ENCODE measurements at regions of chr20 and their contacts with region 1.

Region 1: DNA sequence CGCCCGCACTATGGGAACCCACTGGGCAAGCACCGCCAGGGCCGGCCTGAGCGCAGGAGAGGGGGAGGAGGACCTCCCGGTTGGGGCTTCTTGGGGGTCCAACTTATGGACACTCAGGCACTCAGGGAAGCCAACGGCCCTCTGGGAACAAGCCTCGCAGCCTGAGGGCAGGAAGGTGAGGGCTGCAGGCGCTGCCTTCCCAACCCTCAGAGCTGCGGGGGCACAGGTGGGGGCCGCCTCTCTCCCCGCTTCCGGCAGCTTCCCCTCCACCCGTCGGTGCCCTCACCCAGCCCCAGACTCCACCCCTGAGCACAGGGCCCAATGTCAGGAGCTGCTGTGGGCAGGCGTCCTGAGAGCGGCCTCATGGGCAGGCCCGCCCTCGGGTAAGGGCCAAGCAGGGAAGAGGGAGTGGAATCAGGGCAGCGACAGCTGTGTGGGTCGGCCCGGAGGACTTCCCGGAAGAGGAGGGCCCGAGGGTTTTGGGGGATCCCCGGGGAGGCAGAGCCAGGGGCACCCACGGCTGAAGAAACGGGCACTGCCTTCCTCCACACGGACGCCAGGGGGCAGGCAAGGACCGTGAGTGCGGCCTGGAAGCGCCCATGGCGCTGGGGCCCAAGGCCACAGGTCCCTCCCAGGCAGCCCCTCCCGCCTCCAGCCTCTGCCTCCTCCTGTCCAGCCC is 488 bp upstream of the PTK6 start:
- DNase-seq: peak; percentile 97
- H3K4me3 Mint-ChIP-seq: peak overlapping the region; percentile 73
- H3K27ac Mint-ChIP-seq: peak overlapping the region; percentile 87
- H3K4me1 Mint-ChIP-seq: peaks cover 27% of the 10 kb centered on the region
- H3K27me3 Mint-ChIP-seq: peaks cover 2% of the 10 kb centered on the region

Region 2: GRCh38 chr20:63553227-63553932 is 15.7 kb after region 1 on chr20:
- CTCF ChIA-PET with region 1: interaction called, 20 read pairs
- POLR2A ChIA-PET with region 1: interaction called, 31 read pairs
- DNase-seq: peak; percentile 90
- H3K4me3 Mint-ChIP-seq: peak overlapping the region; percentile 41
- H3K27ac Mint-ChIP-seq: peak overlapping the region; percentile 77
- H3K4me1 Mint-ChIP-seq: peaks cover 15% of the 10 kb centered on the region
- H3K27me3 Mint-ChIP-seq: peaks cover 23% of the 10 kb centered on the region

Region 3: DNA sequence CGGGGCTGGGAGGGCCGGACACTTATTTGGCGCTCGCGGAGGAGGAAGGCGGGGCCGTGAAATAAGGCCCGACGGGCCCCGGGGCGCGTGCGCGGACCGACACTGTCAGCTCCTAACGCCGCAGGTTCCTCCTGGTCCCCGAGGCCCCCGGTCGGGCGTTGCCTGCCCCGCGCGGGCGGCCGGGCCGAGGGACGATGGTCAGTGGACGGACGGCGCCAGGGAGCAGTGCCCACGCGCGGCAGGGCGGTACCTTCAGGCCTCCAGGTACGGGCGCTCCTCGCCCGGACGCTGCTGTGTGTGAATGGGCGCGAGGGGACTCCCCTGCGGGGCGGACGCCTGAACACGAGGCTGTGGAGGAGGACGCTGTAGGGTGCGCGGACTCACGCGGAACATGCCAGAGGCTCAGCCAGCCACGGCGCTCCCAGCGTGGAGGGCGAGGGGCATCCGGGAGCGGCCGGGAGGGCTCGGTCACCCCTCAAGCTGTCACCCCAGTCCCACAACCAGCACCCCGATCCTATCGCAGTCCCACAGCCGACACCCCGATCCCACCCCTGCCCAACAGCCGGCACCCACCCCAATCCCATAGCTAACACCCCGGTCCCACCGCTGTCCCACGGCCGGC is 89.6 kb after region 1 on chr20:
- CTCF ChIA-PET with region 1: interaction called, 7 read pairs
- POLR2A ChIA-PET with region 1: interaction called, 12 read pairs
- DNase-seq: peak; percentile 95
- H3K4me3 Mint-ChIP-seq: peak overlapping the region; percentile 98
- H3K27ac Mint-ChIP-seq: peak overlapping the region; percentile 73
- H3K4me1 Mint-ChIP-seq: peaks cover 33% of the 10 kb centered on the region
- H3K27me3 Mint-ChIP-seq: no peaks in the 10 kb centered on the region

Region 4: DNA sequence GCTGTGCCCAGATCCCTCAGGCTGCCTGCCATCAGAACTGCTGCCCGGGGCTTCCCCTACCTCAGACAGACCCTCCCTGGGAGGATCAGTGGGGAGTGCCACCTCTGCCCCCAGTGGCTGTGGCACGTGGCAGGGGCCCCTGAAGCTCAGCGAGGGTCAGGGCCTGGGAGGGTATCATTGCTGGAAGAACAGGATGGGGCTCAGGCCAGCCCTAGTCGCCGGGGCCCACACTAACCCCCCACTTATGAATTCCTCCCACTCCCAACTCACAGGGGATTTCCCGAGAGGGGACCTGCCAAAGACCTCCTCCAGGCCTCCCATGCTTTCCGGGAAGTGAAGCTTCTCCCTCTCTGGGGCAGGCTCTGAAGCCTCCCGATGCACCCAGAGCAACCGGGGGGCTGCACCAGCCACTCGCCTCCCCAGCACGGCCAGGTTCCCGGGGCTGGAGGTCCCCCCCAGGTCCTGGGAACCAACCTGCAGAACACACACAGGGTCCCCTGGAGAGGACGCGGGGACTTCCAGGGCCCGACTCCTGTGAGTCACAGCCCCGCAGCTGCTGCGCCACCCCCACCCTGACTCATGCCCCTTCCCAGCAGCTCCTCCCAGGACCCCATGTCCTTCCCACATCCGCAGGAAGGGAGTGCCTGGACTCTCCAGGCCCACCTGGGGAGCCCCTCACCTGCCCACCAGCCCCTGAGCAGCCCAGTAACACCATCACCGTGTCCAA is 161.2 kb after region 1 on chr20:
- CTCF ChIA-PET with region 1: interaction called, 5 read pairs
- POLR2A ChIA-PET with region 1: interaction called, 13 read pairs
- DNase-seq: peak; percentile 54
- H3K4me3 Mint-ChIP-seq: no peak overlapping the region
- H3K27ac Mint-ChIP-seq: peak overlapping the region; percentile 59
- H3K4me1 Mint-ChIP-seq: peaks cover 33% of the 10 kb centered on the region
- H3K27me3 Mint-ChIP-seq: no peaks in the 10 kb centered on the region

Region 5: DNA sequence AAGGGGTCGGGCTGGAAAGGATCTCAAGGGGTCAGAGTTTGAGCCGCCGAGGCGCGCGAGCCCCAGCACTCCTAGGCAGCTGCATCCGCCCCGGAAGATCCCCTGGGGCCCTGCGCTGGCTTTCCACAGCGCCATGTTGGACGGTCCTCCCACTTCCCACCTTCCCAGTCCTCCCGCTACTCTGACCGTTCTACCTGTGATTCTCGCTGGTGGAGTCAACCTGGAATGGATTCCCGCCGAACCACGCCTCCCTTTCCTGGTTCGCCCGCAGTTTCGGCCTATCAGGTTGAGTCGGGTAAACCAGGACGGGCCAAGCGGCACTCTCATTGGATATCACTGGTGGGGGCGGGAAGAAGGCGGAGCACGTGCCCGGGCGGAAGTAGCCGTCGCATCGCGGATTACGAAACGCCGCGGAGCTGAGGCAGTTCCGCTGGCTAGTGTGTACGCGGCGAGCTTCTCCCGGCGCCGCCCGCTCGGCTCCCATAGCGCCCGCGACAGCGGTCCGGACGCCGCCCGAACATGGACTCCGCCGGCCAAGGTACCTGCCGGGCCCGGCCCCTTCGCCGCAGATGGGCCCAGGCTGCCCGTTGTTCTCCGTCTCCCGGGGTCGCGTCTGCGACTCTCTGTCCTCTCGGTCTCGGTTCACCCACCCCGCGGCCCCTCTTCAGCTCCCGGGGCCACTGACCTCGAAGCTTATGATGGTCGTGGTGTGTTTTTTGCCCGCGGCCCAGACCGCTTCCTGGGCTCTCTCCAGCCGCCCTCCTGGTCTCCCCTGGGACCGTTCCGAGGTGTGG is 327.4 kb after region 1 on chr20 and contains the start of gene TPD52L2:
- CTCF ChIA-PET with region 1: interaction called, 24 read pairs
- POLR2A ChIA-PET with region 1: interaction called, 17 read pairs
- DNase-seq: peak; percentile 99
- H3K4me3 Mint-ChIP-seq: peak within 1 kb of the TSS; percentile 83
- H3K27ac Mint-ChIP-seq: peak within 1 kb of the TSS; percentile 88
- H3K4me1 Mint-ChIP-seq: peaks cover 40% of the 10 kb centered on the region
- H3K27me3 Mint-ChIP-seq: no peaks in the 10 kb centered on the region
- total RNA-seq, gene TPD52L2: 48.2 to 48.7 TPM